IMR-90 (cell line): ENCODE measurements at regions of chr12 and their contacts with region 1.

Region 1: DNA sequence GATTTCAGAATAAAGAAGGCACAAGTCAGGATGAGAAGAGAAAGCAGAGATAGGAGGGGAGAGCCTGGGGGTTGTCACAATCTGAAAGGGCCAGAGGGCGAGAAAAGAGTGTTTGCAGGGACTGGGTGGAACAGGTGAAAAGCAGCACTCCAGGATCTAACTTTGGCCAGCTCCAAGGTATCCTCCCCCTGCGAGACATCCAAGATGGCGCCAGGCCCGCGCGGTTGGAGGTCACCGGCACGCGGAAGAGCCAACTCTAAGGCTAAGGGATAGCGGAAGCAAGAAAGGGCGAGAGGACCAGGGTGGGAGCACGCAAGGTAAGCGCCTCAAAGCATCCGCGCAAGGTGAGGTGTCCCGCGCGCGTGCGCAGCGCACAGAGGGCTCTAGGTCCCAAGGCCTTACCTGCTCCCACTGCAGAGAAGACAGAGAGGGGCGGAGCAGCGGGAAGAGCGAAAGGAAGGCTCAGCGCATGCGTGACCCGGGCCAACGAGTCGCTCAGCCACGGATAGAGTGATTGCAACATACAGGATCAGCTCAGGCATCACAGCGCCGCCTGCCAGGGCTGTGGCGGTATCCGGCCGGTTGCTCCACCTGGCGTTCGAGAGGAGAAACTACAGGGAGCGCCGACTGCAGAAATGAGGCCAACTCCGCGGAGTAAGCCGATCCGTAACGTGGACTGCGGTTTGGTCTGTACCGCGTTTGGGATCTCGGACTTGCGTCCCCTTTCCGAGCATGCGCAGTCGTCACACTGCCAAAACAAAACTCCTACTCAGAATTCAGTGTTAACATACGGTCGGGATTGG is at the start of gene ATP5MC2:
- DNase-seq: peak; percentile 99
- ATAC-seq: peak; percentile 96
- H3K4me3 ChIP-seq: peak within 1 kb of the TSS; percentile 79
- H3K27ac ChIP-seq: peak within 1 kb of the TSS; percentile 88
- H3K4me1 ChIP-seq: peaks cover 18% of the 10 kb centered on the region
- H3K27me3 ChIP-seq: no peaks in the 10 kb centered on the region
- CTCF ChIP-seq: peak; percentile 100; the same call in 1 of the 2 replicates
- POLR2A ChIP-seq: peak; percentile 60; the same call in 1 of the 2 replicates
- RAD21 ChIP-seq: peak; percentile 91
- total RNA-seq, gene ATP5MC2: 138 and 361 TPM in 2 replicates

Region 2: GRCh38 chr12:53543539-53543938 is 132.3 kb before region 1 on chr12:
- CTCF ChIA-PET with region 1: interaction called, 10 read pairs
- POLR2A ChIA-PET with region 1: no interaction called
- dilution Hi-C with region 1: no loop called
- in situ Hi-C with region 1: loop called (anchors 5 kb)
- intact Hi-C with region 1: loop called (anchors 1 kb)
- DNase-seq: peak; percentile 73
- ATAC-seq: peak; percentile 96
- H3K4me3 ChIP-seq: no peak overlapping the region
- H3K27ac ChIP-seq: no peak overlapping the region
- H3K4me1 ChIP-seq: no peaks in the 10 kb centered on the region
- H3K27me3 ChIP-seq: no peaks in the 10 kb centered on the region
- CTCF ChIP-seq: peak; percentile 96
- POLR2A ChIP-seq: no peak
- RAD21 ChIP-seq: peak; percentile 76

Region 3: DNA sequence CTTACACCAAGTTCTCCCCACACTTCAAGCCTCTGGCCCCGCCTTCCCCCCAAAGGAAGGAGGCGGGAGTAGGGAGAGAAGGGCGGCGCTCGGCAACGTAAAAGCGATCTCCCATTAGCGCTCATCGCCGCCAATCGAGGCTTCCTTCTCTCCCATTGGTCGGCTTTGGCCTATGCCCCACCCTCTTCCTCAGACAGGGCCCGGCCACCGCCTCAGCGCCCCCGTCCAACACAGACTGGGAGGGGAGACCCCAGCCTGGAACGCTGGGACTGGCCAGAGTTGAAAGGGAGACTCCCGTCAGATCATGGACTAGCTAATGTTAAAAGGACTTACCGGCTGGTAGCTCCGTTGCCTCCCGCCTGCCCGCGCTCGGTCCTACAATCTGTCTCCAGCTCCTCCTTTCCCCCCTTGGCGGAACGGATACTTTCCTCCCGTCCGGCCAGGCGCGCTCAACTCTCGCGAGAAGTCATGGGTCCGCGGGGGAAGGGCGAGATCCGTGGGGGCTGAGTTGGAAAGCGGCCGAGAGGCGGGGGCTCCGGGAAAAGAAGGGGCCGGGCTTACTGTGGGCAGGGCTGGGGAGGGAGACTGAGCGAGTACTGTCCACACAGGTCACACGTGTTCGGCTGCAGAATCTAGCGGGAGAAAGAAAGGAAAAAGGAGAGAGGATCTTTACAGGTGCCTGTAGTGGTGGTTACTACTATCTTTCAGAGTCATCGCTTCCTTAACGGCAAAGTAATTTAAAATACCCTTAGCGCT is 49.7 kb before region 1 on chr12 and contains the start of gene ATF7:
- CTCF ChIA-PET with region 1: no interaction called
- POLR2A ChIA-PET with region 1: interaction called, 3 read pairs
- dilution Hi-C with region 1: no loop called
- in situ Hi-C with region 1: no loop called
- intact Hi-C with region 1: loop called (anchors 1 kb)
- DNase-seq: peak; percentile 97
- ATAC-seq: peak; percentile 98
- H3K4me3 ChIP-seq: peak within 1 kb of the TSS; percentile 70
- H3K27ac ChIP-seq: peak within 1 kb of the TSS; percentile 95
- H3K4me1 ChIP-seq: peaks cover 4% of the 10 kb centered on the region
- H3K27me3 ChIP-seq: no peaks in the 10 kb centered on the region
- CTCF ChIP-seq: no peak
- POLR2A ChIP-seq: peak; percentile 75
- RAD21 ChIP-seq: no peak
- total RNA-seq, gene ATF7: 7.0 and 9.4 TPM in 2 replicates

Region 4: GRCh38 chr12:53727310-53728041 is 51.6 kb after region 1 on chr12 and contains the start of gene CALCOCO1:
- CTCF ChIA-PET with region 1: interaction called, 4 read pairs
- POLR2A ChIA-PET with region 1: no interaction called
- dilution Hi-C with region 1: no loop called
- in situ Hi-C with region 1: no loop called
- intact Hi-C with region 1: loop called (anchors 5 kb)
- DNase-seq: peak; percentile 97
- ATAC-seq: peak; percentile 99
- H3K4me3 ChIP-seq: peak within 1 kb of the TSS; percentile 77
- H3K27ac ChIP-seq: peak within 1 kb of the TSS; percentile 88
- H3K4me1 ChIP-seq: peaks cover 14% of the 10 kb centered on the region
- H3K27me3 ChIP-seq: peaks cover 1% of the 10 kb centered on the region; the same call in 1 of the 2 replicates
- CTCF ChIP-seq: no peak
- POLR2A ChIP-seq: no peak; the same call in 1 of the 2 replicates
- RAD21 ChIP-seq: no peak
- total RNA-seq, gene CALCOCO1: 100.0 and 169 TPM in 2 replicates

Region 5: DNA sequence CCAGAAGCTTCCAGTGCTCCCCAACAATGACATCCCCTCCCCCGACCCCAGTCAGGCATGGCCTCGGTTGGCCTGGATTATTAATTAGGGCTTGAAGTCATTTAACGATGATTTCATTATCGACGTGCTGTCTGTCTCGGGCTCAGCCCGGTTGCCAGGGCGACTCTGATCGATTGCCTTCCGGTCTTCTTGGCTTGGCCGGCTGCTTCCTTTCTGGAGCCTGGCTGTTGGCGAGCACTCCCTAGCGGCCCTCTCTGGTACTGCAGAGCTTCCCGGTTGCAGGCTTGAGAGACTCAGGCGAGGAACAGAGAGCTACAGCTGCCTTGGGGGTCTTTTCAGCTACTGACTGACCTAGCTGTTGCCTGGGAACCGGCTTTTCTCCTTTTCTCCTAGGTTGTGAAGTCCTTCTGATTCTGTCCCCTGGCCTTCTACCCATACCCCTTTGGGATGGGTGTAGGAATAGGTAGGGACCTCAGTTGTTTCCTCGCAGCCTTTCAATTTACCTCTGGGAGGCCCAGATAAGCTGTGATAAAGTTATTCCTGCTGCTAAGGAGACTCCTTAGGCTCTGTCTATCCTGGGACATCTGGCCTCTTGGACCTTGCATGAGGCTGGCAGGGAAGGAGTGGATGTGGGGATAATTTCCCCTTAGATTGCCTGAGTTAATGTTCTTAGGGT is 81.4 kb after region 1 on chr12:
- CTCF ChIA-PET with region 1: no interaction called
- POLR2A ChIA-PET with region 1: no interaction called
- dilution Hi-C with region 1: no loop called
- in situ Hi-C with region 1: no loop called
- intact Hi-C with region 1: no loop called
- DNase-seq: peak; percentile 55
- ATAC-seq: peak; percentile 89
- H3K4me3 ChIP-seq: no peak overlapping the region
- H3K27ac ChIP-seq: no peak overlapping the region
- H3K4me1 ChIP-seq: peaks cover 2% of the 10 kb centered on the region
- H3K27me3 ChIP-seq: peaks cover 68% of the 10 kb centered on the region
- CTCF ChIP-seq: peak; percentile 64
- POLR2A ChIP-seq: no peak
- RAD21 ChIP-seq: peak; percentile 47